ENCODE measurements at regions of chr18 and their contacts with region 1.

Region 1: GRCh38 chr18:6920099-6920899 is 190.8 kb downstream of the ARHGAP28 start:
- DNase-seq: peak; percentile 75
- H3K4me3 Mint-ChIP-seq: no peak overlapping the region
- H3K27ac Mint-ChIP-seq: no peak overlapping the region
- H3K4me1 Mint-ChIP-seq: peaks cover 6% of the 10 kb centered on the region
- H3K27me3 Mint-ChIP-seq: no peaks in the 10 kb centered on the region
- CTCF ChIP-seq: peak; percentile 83

Region 2: GRCh38 chr18:6683112-6683876 is 237.0 kb before region 1 on chr18:
- CTCF ChIA-PET with region 1: no interaction called
- POLR2A ChIA-PET with region 1: no interaction called
- intact Hi-C with region 1: no loop called
- DNase-seq: no peak
- H3K4me3 Mint-ChIP-seq: no peak overlapping the region
- H3K27ac Mint-ChIP-seq: no peak overlapping the region
- H3K4me1 Mint-ChIP-seq: no peaks in the 10 kb centered on the region
- H3K27me3 Mint-ChIP-seq: no peaks in the 10 kb centered on the region
- CTCF ChIP-seq: no peak

Region 3: GRCh38 chr18:6980363-6980762 is 60.1 kb after region 1 on chr18:
- CTCF ChIA-PET with region 1: interaction called, 19 read pairs
- POLR2A ChIA-PET with region 1: interaction called, 3 read pairs
- intact Hi-C with region 1: no loop called
- DNase-seq: no peak
- H3K4me3 Mint-ChIP-seq: no peak overlapping the region
- H3K27ac Mint-ChIP-seq: no peak overlapping the region
- H3K4me1 Mint-ChIP-seq: no peaks in the 10 kb centered on the region
- H3K27me3 Mint-ChIP-seq: no peaks in the 10 kb centered on the region
- CTCF ChIP-seq: no peak

Region 4: GRCh38 chr18:7000484-7001096 is 80.3 kb after region 1 on chr18:
- CTCF ChIA-PET with region 1: interaction called, 193 read pairs
- POLR2A ChIA-PET with region 1: interaction called, 4 read pairs
- intact Hi-C with region 1: loop called (anchors 1 kb)
- DNase-seq: peak; percentile 42
- H3K4me3 Mint-ChIP-seq: no peak overlapping the region
- H3K27ac Mint-ChIP-seq: no peak overlapping the region
- H3K4me1 Mint-ChIP-seq: no peaks in the 10 kb centered on the region
- H3K27me3 Mint-ChIP-seq: no peaks in the 10 kb centered on the region
- CTCF ChIP-seq: peak; percentile 40

Region 5: GRCh38 chr18:7021994-7022840 is 101.9 kb after region 1 on chr18:
- CTCF ChIA-PET with region 1: interaction called, 208 read pairs
- POLR2A ChIA-PET with region 1: interaction called, 8 read pairs
- intact Hi-C with region 1: loop called (anchors 1 kb)
- DNase-seq: peak; percentile 84
- H3K4me3 Mint-ChIP-seq: no peak overlapping the region
- H3K27ac Mint-ChIP-seq: peak overlapping the region; percentile 39
- H3K4me1 Mint-ChIP-seq: no peaks in the 10 kb centered on the region
- H3K27me3 Mint-ChIP-seq: no peaks in the 10 kb centered on the region
- CTCF ChIP-seq: peak; percentile 72

Region 6: DNA sequence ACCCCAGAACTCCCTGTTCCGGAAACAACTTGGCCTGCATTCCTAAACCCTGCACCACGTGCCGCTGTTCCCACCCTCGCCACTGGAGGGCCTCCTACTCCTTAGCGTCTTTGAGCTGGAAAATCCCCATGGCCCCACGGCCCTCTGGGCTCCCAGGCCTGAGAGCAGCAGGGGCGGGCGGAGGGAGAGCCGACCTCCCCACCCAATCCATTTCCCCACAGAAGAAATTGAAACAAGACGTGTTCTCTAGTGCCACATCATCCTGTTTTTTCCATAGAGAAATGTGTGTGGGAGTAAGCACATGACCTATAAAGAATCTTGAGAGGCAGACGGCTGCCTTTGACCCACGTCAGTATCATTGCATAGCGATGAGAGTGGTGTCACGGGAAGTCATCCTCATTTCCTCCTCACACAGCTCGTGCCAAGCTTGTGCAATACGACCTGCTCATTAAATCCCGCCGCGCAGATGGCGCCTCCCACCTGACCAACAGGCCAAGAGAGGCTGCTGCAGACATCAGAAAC is 118.1 kb after region 1 on chr18:
- CTCF ChIA-PET with region 1: interaction called, 20 read pairs
- POLR2A ChIA-PET with region 1: no interaction called
- intact Hi-C with region 1: no loop called
- DNase-seq: peak; percentile 97
- H3K4me3 Mint-ChIP-seq: peak overlapping the region; percentile 50
- H3K27ac Mint-ChIP-seq: peak overlapping the region; percentile 85
- H3K4me1 Mint-ChIP-seq: peaks cover 7% of the 10 kb centered on the region
- H3K27me3 Mint-ChIP-seq: no peaks in the 10 kb centered on the region
- CTCF ChIP-seq: peak; percentile 75

Measured in MCF 10A (cell line).